ENCODE measurements at regions of chr1 and their contacts with region 1.

Region 1: GRCh38 chr1:152347116-152347728 is 12.6 kb downstream of the FLG2 start:
- DNase-seq: peak; percentile 63
- H3K4me3 ChIP-seq: no peak overlapping the region
- H3K27ac ChIP-seq: no peak overlapping the region
- H3K4me1 ChIP-seq: no peaks in the 10 kb centered on the region
- H3K27me3 ChIP-seq: peaks cover 0 to 1% of the 10 kb centered on the region in 2 experiments
- CTCF ChIP-seq: peak; percentile 68 to 72
- POLR2A ChIP-seq: no peak

Region 2: DNA sequence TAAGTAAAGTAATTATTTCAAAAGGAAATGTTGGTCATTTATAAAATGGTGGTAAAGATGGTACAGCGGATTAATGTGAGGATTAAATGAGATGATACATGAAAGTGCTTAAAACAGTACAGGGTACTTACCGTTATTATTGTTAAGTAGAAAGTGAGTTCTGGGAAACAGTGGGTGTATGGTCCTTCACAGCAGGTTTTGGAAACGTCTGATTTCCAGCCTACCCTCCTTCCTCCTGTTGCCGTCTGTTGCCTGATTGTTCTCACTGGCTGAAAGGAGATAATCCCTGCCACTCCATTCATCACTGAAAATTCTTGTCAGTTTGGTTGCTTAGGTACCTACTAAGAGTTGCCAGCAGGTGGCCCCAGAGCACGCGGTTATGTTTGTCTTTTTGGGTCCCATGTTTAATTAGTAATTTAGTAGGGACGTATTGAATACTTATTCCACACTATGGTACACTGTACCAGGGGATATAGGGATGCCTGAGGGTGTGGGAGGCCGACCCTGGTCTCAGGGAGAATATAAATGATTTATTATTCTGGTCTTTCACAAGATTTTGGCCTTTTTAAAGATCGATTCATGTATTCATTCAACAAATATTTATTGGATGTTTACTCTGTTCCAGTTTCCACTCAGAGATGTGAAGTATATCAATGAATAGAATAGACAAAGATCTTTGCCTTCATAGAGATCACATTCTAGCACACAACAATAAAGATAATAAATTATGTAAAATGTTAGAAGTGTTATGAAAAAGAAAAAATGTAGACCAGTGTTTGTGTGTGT is 157.4 kb before region 1 on chr1:
- CTCF ChIA-PET with region 1: interaction called, 17 read pairs
- POLR2A ChIA-PET with region 1: no interaction called
- dilution Hi-C with region 1: no loop called
- intact Hi-C with region 1: loop called (anchors 1 kb)
- DNase-seq: peak; percentile 65
- H3K4me3 ChIP-seq: peak overlapping the region in 2 of 3 experiments; percentile 43 to 48
- H3K27ac ChIP-seq: no peak overlapping the region
- H3K4me1 ChIP-seq: peaks cover 5% of the 10 kb centered on the region
- H3K27me3 ChIP-seq: peaks cover 0 to 4% of the 10 kb centered on the region in 2 experiments
- CTCF ChIP-seq: peak; percentile 65 to 72
- POLR2A ChIP-seq: no peak

Region 3: GRCh38 chr1:152335399-152335798 is 11.8 kb before region 1 on chr1:
- CTCF ChIA-PET with region 1: interaction called, 28 read pairs
- POLR2A ChIA-PET with region 1: no interaction called
- dilution Hi-C with region 1: no loop called
- intact Hi-C with region 1: no loop called
- DNase-seq: no peak
- H3K4me3 ChIP-seq: no peak overlapping the region
- H3K27ac ChIP-seq: no peak overlapping the region
- H3K4me1 ChIP-seq: no peaks in the 10 kb centered on the region
- H3K27me3 ChIP-seq: no peaks in the 10 kb centered on the region
- CTCF ChIP-seq: no peak
- POLR2A ChIP-seq: no peak

Region 4: GRCh38 chr1:152367434-152367833 is 20.2 kb after region 1 on chr1:
- CTCF ChIA-PET with region 1: interaction called, 16 read pairs
- POLR2A ChIA-PET with region 1: no interaction called
- dilution Hi-C with region 1: no loop called
- intact Hi-C with region 1: no loop called
- DNase-seq: no peak
- H3K4me3 ChIP-seq: no peak overlapping the region
- H3K27ac ChIP-seq: no peak overlapping the region
- H3K4me1 ChIP-seq: no peaks in the 10 kb centered on the region
- H3K27me3 ChIP-seq: no peaks in the 10 kb centered on the region
- CTCF ChIP-seq: no peak
- POLR2A ChIP-seq: no peak

Region 5: DNA sequence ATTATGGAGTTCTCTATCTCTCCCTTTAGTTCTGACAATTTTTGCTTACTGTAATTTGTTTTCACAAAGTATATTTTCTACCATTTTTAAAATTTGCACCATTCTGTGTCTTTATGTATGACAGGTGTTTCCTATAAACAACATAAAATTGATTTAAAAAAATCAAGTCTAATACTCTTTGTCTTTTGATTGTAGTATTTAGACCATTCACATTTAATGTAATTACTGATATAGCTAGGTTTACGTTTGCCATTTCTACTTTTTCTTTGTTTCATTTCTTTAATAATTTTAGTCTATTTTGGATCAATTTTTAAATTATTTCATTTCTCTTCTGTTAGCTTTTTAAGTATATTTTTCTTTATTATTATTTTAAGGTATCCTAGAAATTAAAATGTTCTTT is 119.0 kb after region 1 on chr1:
- CTCF ChIA-PET with region 1: no interaction called
- POLR2A ChIA-PET with region 1: no interaction called
- dilution Hi-C with region 1: no loop called
- intact Hi-C with region 1: no loop called
- DNase-seq: no peak
- H3K4me3 ChIP-seq: no peak overlapping the region
- H3K27ac ChIP-seq: no peak overlapping the region
- H3K4me1 ChIP-seq: no peaks in the 10 kb centered on the region
- H3K27me3 ChIP-seq: peaks cover 0 to 2% of the 10 kb centered on the region in 2 experiments
- CTCF ChIP-seq: no peak
- POLR2A ChIP-seq: no peak

Measured in endothelial cell of umbilical vein (primary cell).